ENCODE measurements at regions of chr12 and their contacts with region 1.

Region 1: DNA sequence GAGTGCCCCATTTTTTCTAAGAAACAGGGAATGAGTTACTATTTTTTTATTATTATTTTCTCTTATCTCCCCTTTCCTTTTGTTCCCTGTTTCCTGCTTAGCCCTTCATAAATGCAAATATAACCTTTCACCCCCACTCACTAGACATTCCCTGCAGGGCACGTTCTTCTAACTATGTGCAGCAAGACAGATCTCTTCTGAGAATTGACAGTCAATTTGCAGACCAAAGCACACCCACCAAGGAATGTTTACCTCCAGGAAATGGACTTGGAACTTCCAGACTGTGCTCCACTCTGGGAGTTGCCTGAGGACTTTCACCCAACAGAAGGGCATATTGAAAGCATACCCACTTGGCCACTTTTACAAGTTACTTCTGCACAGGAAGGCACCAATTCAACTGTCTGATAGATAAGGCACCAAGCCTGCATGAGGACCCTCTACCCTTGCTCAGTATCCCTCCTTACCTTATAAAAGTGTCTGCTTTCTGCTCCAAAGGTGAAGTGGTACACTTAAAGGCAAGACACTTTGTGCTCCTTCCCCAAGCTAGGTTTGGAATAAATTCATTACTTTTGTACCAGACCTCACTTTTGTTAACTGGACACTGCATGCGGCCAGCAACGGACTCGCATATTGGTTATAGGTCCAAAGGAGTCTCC is 6.5 kb downstream of the TAS2R19 start:
- DNase-seq: no peak
- ATAC-seq: peak in 1 of 2 donors; percentile 14
- H3K4me3 ChIP-seq: no peak overlapping the region
- H3K27ac ChIP-seq: no peak overlapping the region
- H3K4me1 ChIP-seq: no peaks in the 10 kb centered on the region
- H3K27me3 ChIP-seq: no peaks in the 10 kb centered on the region

Region 2: GRCh38 chr12:10891937-10892336 is 124.0 kb before region 1 on chr12:
- intact Hi-C with region 1: no loop called
- DNase-seq: no peak
- ATAC-seq: no peak
- H3K4me3 ChIP-seq: no peak overlapping the region
- H3K27ac ChIP-seq: no peak overlapping the region
- H3K4me1 ChIP-seq: no peaks in the 10 kb centered on the region
- H3K27me3 ChIP-seq: no peaks in the 10 kb centered on the region

Region 3: GRCh38 chr12:11067514-11067913 is 51.6 kb after region 1 on chr12:
- intact Hi-C with region 1: loop called in 2 of 4 experiments (anchors 5 to 10 kb)
- DNase-seq: peak; percentile 16 to 43 (median 42)
- ATAC-seq: peak; percentile 78 to 79
- H3K4me3 ChIP-seq: no peak overlapping the region
- H3K27ac ChIP-seq: no peak overlapping the region
- H3K4me1 ChIP-seq: no peaks in the 10 kb centered on the region
- H3K27me3 ChIP-seq: no peaks in the 10 kb centered on the region

Region 4: DNA sequence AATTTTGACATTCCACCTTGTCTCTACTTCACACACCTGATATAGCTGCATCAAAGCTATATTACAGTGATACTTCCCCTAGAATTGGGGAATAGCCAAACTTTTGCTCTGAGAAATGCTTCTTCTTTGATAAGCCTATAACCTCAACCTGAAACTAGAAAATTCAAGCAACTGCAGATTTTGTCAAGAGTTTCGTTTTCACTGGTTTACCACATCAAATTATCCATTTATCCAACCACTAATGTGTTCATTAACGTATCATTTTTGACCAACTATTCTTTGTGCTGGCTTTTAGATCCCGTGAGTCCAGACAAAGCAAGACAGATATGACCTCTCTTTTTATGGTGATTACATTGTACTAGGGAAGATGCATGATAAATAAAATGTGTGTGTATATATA is 59.7 kb after region 1 on chr12:
- intact Hi-C with region 1: loop called in 2 of 4 experiments (anchors 5 to 10 kb)
- DNase-seq: no peak
- ATAC-seq: no peak
- H3K4me3 ChIP-seq: no peak overlapping the region
- H3K27ac ChIP-seq: no peak overlapping the region
- H3K4me1 ChIP-seq: no peaks in the 10 kb centered on the region
- H3K27me3 ChIP-seq: no peaks in the 10 kb centered on the region